CD4-positive, alpha-beta T cell (primary cell): ENCODE measurements at regions of chr12 and their contacts with region 1.

Region 1: DNA sequence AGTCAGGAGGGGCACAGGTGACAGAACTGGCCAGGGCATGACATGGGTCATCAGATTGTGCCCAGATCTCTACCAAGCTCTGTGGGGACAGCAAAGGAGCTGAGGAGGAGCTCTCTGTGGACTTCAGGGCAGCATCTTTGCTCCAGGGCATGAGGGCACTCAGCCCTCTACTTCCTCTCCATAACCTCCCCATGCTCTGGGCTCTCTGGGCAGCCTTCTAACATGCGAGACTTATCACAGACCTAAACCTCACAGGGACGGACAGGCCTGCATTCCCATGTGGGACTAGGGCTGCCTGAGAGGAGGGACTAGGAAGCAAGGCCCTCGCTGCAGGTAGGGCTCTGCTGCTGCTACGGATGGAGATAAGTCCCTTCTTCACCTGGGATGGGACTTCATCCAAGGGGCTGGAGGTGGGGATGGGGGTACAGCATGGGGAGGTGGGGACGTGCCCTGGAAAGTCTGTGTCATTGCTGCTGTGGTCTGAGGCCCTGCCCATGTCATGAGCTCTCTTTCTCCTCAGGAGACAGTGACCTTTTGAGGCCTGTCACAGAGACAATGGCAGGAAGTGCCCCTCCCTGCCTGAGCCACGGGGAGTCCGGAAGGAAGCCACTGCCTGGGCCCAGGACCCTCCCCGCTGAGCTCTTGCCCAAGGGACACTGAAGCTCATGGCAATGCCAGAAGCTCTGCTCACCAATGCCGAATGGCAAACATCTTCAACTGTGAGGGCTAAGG is 44.1 kb downstream of the PITPNM2 start:
- DNase-seq: peak in 13 of 14 experiments; percentile 28 to 84 (median 57)
- ATAC-seq: peak; percentile 94
- H3K4me3 ChIP-seq: peak overlapping the region; percentile 29
- H3K4me3 Mint-ChIP-seq: peak overlapping the region; percentile 66
- H3K27ac ChIP-seq: peak overlapping the region; percentile 56 to 85
- H3K27ac Mint-ChIP-seq: peak overlapping the region; percentile 98
- H3K4me1 ChIP-seq: peaks cover 53% of the 10 kb centered on the region
- H3K4me1 Mint-ChIP-seq: peaks cover 64% of the 10 kb centered on the region
- H3K27me3 ChIP-seq: no peaks in the 10 kb centered on the region
- H3K27me3 Mint-ChIP-seq: no peaks in the 10 kb centered on the region
- CTCF ChIP-seq: no peak

Region 2: DNA sequence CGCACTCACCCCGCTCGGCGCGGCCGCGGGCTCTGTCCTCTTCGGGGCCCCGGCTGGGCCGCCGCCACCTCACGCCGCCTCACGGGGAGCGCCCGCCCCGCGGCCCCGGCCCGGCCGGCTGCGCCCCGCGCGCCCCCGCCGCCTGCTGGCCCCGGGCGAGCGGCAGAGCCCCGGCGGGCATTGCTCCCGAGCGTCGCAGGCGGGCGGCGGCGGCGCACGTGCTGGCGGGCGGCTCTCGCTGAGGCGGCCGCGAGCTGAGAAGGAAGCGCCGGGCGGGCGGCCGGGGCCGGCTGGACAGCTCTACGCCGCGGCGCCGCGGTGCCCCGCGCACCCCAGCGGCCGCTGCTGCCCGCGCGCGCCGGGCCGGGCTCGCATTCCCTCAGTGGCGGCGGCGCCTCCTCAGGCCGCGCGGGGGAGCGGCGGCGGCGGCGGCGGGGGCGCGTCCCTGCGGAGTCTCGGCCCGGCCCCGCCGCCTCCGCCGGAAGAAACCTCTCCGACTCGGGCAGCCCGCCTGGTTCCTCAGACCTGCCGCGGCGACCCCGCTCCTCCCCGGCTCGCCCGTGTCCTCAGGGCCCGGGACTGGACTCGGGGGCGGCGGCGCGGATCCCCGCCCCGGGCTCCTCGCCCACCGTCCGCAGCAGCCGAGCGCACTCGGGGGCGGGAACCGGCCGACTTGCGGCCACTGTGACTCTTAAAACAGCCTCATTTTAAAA is 44.1 kb after region 1 on chr12 and contains the start of gene PITPNM2:
- CTCF ChIA-PET with region 1: no interaction called
- POLR2A ChIA-PET with region 1: interaction called, 10 read pairs
- intact Hi-C with region 1: loop called in 1 of 2 experiments (anchors 5 kb)
- DNase-seq: peak; percentile 28 to 87 (median 60)
- ATAC-seq: peak; percentile 86
- H3K4me3 ChIP-seq: peak within 1 kb of the TSS; percentile 76
- H3K4me3 Mint-ChIP-seq: peak within 1 kb of the TSS; percentile 93
- H3K27ac ChIP-seq: peak within 1 kb of the TSS; percentile 22 to 40
- H3K27ac Mint-ChIP-seq: peak within 1 kb of the TSS; percentile 89
- H3K4me1 ChIP-seq: peaks cover 27% of the 10 kb centered on the region
- H3K4me1 Mint-ChIP-seq: peaks cover 52% of the 10 kb centered on the region
- H3K27me3 ChIP-seq: no peaks in the 10 kb centered on the region
- H3K27me3 Mint-ChIP-seq: no peaks in the 10 kb centered on the region
- CTCF ChIP-seq: no peak
- total RNA-seq, gene PITPNM2: 37.3 to 38.3 TPM

Region 3: DNA sequence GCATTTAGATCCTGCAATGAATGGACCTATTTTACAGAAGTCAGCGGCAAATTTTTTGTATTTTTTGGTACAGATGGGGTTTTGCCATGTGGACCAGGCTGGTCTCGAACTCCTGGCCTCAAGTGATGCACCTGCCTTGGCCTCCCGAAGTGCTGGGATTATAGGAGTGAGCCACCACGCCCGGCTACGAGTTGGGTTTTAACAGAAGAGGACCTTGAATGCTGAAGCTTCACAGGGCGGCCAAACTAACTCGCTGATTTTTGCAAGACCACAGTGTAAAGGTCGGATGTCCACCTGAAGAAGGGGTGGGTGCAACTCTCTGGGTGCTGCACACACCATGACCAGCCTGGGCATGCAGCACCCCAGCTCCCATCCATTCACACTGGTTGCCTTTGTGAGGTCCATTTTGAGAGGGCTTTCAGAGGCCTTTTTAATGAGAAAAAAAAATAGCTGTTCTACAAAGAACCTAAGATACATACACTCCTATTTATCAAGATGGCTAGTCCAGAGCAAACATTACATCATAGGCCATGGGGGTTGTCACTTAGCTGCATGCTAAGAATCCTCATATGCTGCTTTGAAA is 186.5 kb after region 1 on chr12:
- CTCF ChIA-PET with region 1: no interaction called
- POLR2A ChIA-PET with region 1: no interaction called
- intact Hi-C with region 1: no loop called
- DNase-seq: no peak
- ATAC-seq: no peak
- H3K4me3 ChIP-seq: no peak overlapping the region
- H3K4me3 Mint-ChIP-seq: no peak overlapping the region
- H3K27ac ChIP-seq: no peak overlapping the region
- H3K27ac Mint-ChIP-seq: no peak overlapping the region
- H3K4me1 ChIP-seq: no peaks in the 10 kb centered on the region
- H3K4me1 Mint-ChIP-seq: no peaks in the 10 kb centered on the region
- H3K27me3 ChIP-seq: no peaks in the 10 kb centered on the region
- H3K27me3 Mint-ChIP-seq: no peaks in the 10 kb centered on the region
- CTCF ChIP-seq: no peak

Region 4: GRCh38 chr12:123667791-123668560 is 561.2 kb after region 1 on chr12:
- CTCF ChIA-PET with region 1: no interaction called
- POLR2A ChIA-PET with region 1: no interaction called
- intact Hi-C with region 1: no loop called
- DNase-seq: no peak
- ATAC-seq: no peak
- H3K4me3 ChIP-seq: no peak overlapping the region
- H3K4me3 Mint-ChIP-seq: no peak overlapping the region
- H3K27ac ChIP-seq: no peak overlapping the region
- H3K27ac Mint-ChIP-seq: no peak overlapping the region
- H3K4me1 ChIP-seq: peaks cover 18% of the 10 kb centered on the region
- H3K4me1 Mint-ChIP-seq: peaks cover 15% of the 10 kb centered on the region
- H3K27me3 ChIP-seq: no peaks in the 10 kb centered on the region
- H3K27me3 Mint-ChIP-seq: no peaks in the 10 kb centered on the region
- CTCF ChIP-seq: no peak

Region 5: DNA sequence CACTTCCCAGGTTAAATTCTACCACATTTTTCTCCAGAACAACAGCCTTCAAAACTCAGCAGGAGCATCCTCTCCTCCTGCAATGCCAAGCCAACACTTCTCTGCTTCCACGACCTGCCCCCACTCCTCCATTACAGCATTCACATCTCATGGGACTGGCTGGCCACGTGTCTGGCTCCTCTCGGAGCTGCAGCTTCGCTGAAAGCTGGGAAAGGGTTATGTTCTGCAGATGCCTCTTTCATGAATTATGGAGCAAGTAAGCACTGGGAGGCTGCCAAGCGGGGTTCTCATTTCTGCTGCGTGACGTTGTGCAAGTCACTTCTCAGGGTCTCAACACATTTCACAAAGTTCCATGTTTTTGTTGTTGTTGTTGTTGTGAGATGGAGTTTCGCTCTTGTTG is 1045.9 kb after region 1 on chr12:
- CTCF ChIA-PET with region 1: no interaction called
- POLR2A ChIA-PET with region 1: no interaction called
- intact Hi-C with region 1: no loop called
- DNase-seq: no peak
- ATAC-seq: no peak
- H3K4me3 ChIP-seq: no peak overlapping the region
- H3K4me3 Mint-ChIP-seq: no peak overlapping the region
- H3K27ac ChIP-seq: no peak overlapping the region
- H3K27ac Mint-ChIP-seq: no peak overlapping the region
- H3K4me1 ChIP-seq: no peaks in the 10 kb centered on the region
- H3K4me1 Mint-ChIP-seq: no peaks in the 10 kb centered on the region
- H3K27me3 ChIP-seq: no peaks in the 10 kb centered on the region
- H3K27me3 Mint-ChIP-seq: peaks cover under 1% of the 10 kb centered on the region
- CTCF ChIP-seq: no peak